ENCODE measurements at regions of chr4 and their contacts with region 1.

Region 1: DNA sequence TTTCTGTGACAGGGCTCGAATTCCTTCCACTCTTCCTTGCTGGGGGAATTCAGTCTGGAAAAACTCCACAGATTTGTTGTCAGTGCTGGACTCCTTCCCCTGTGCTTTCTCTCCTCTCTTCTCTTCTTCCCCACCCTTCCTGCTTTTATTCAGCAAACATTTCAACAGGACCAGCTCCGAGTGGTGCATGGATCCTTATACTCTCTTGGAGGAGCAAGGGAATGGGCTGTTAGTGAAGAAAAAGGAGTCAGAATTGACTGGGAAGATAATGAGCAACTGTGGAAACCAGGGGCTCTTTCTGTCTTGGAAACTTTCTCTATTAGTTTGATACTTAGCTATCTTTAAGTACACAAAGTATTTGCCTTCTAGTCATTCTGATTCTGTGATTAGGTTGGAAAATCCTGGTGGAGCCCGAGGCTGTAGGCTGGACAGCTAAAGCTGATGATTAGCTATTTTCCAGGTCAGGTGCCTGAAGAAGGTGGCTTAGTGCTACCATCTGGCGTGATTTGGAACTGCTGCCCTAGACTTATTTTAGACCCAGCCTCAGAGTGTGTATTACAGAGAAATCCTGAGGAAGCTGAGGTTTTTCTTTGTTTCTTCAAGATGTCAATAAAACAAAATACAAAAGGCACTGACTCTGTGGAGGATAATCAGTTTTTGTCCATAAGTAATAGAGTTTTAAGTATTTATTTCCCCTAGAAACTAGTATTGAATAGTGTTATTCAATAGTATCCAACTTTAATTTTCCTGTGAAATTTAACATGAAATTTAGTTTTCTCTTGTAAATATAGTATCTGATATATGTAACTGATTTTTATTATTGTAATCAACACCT is 38.4 kb downstream of the NAP1L5 start:
- DNase-seq: peak; percentile 82
- H3K4me3 ChIP-seq: no peak overlapping the region
- H3K27ac ChIP-seq: peak overlapping the region; percentile 43
- H3K4me1 ChIP-seq: peaks cover 24% of the 10 kb centered on the region
- H3K27me3 ChIP-seq: no peaks in the 10 kb centered on the region
- CTCF ChIP-seq: peak; percentile 95

Region 2: DNA sequence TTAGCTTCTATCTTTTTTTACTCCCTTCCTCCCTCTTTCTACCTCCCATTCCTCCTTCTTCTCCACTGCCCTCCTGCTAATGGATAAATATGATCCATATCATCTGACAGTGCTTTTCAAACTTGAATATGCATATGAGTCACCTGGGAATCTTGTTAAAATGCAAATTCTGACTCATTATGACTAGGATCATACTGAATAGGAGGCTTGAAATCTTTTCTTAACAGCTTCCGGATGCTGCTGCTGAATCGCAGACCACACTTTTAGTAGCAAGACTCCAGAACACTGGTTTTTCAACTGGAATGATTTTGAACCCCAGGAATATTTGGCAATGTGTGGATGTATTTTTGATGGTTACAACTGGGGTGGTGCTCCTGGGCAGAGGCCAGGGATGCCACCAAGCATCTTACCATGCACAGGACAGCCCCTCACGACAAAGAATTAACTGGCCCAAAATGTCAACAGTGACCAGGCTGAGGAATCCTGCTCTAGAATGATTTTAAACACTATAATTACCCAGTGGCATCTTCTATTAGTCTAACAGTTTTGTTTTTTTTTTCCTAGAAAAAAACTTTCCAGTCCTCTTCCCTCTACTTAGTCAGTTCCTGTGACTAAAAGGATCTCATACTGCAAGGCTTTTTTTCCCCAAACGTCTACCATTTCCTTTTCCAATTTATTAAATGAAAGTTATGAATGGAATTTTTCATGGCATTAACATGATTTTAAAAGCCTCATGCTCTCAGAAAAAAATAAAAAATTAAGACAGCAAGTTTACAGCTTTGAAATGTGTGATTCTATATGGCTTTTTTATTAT is 125.1 kb before region 1 on chr4:
- CTCF ChIA-PET with region 1: interaction called, 26 read pairs
- dilution Hi-C with region 1: no loop called
- in situ Hi-C with region 1: loop called (anchors 5 kb)
- intact Hi-C with region 1: loop called (anchors 1 kb)
- DNase-seq: peak; percentile 87
- H3K4me3 ChIP-seq: peak overlapping the region in 2 of 3 experiments; percentile 13 to 26
- H3K27ac ChIP-seq: peak overlapping the region; percentile 84
- H3K4me1 ChIP-seq: peaks cover 32% of the 10 kb centered on the region
- H3K27me3 ChIP-seq: no peaks in the 10 kb centered on the region
- CTCF ChIP-seq: no peak

Region 3: DNA sequence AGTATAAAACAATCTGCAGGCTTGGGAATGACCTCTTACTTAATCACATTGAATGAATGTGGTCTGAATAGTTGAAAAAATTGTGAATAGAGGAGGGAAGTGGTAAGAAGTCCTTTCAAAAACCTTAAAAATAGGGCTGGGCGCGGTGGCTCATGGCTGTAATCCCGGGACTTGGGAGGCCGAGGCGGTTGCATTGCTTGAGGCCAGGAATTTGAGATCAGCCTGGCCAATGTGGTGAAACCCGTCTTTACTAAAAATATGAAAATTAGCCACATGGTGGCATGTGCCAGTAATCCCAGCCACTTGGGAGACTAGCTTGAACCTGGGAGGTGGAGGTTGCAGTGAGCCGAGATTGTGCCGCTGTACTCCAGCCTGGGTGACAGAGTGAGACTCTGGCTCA is 30.5 kb before region 1 on chr4:
- CTCF ChIA-PET with region 1: no interaction called
- dilution Hi-C with region 1: no loop called
- in situ Hi-C with region 1: no loop called
- intact Hi-C with region 1: loop called (anchors 1 kb)
- DNase-seq: no peak
- H3K4me3 ChIP-seq: no peak overlapping the region
- H3K27ac ChIP-seq: peak overlapping the region; percentile 7
- H3K4me1 ChIP-seq: peaks cover 15% of the 10 kb centered on the region
- H3K27me3 ChIP-seq: no peaks in the 10 kb centered on the region
- CTCF ChIP-seq: no peak

Region 4: GRCh38 chr4:88728146-88728545 is 68.9 kb after region 1 on chr4:
- CTCF ChIA-PET with region 1: no interaction called
- dilution Hi-C with region 1: no loop called
- in situ Hi-C with region 1: no loop called
- intact Hi-C with region 1: no loop called
- DNase-seq: no peak
- H3K4me3 ChIP-seq: no peak overlapping the region
- H3K27ac ChIP-seq: no peak overlapping the region
- H3K4me1 ChIP-seq: no peaks in the 10 kb centered on the region
- H3K27me3 ChIP-seq: no peaks in the 10 kb centered on the region
- CTCF ChIP-seq: no peak